A673 (cell line): ENCODE measurements at regions of chr9 and their contacts with region 1.

Region 1: GRCh38 chr9:6008169-6008979 is 7.0 kb downstream of the RANBP6 start:
- DNase-seq: peak; percentile 98
- H3K4me3 ChIP-seq: peak overlapping the region; percentile 86
- H3K27ac ChIP-seq: peak overlapping the region; percentile 82
- H3K4me1 ChIP-seq: peaks cover 15% of the 10 kb centered on the region
- H3K27me3 ChIP-seq: no peaks in the 10 kb centered on the region
- CTCF ChIP-seq: no peak

Region 2: GRCh38 chr9:6218099-6218502 is 209.7 kb after region 1 on chr9:
- CTCF ChIA-PET with region 1: no interaction called
- POLR2A ChIA-PET with region 1: interaction called, 11 read pairs
- intact Hi-C with region 1: no loop called
- DNase-seq: peak; percentile 97
- H3K4me3 ChIP-seq: peak overlapping the region; percentile 1
- H3K27ac ChIP-seq: peak overlapping the region; percentile 74
- H3K4me1 ChIP-seq: peaks cover 47% of the 10 kb centered on the region
- H3K27me3 ChIP-seq: peaks cover 4% of the 10 kb centered on the region
- CTCF ChIP-seq: no peak